ENCODE measurements at regions of chr1 and their contacts with region 1.

Region 1: DNA sequence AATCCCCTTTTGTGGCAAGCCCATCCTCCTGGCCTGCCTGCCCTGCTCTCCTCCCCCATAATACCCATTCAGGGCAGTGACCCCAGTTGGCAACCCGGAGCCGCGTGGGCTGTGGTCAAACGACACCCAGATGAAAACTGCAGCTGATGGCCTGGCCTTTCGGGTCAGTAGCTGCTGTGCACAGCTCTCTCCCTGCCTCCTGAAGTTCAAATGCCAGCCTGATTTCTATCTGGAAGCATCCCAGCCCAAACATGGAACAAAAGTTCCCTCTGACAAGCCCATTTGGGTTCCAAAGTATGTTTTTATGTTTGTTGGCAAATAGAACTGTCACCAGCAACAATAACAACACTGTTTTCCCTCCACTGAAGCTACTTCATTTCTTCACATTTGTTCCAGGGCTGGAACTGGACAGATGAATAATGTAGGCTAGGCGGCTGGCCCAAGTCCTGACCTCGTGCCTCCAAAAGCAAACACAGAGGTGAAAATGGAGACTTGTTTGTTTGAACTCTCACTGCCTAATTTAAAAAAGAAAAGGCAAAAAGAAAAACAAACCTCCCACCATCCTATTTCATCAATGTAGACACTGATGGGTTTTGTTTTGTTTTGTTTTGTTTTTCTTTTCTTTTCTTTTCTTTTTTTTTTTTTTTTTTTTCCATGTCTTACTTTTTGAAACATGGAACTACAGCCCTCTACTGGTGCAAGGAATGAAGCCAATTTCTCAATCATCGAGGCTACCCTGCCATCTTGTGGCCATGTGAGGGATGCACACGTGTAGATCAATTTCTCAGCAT is 179.0 kb downstream of the ADSS2 start:
- DNase-seq: peak; percentile 97
- H3K4me3 Mint-ChIP-seq: peak overlapping the region; percentile 65
- H3K27ac Mint-ChIP-seq: peak overlapping the region; percentile 52
- H3K4me1 Mint-ChIP-seq: peaks cover 32% of the 10 kb centered on the region
- H3K27me3 Mint-ChIP-seq: no peaks in the 10 kb centered on the region
- CTCF ChIP-seq: peak; percentile 100

Region 2: DNA sequence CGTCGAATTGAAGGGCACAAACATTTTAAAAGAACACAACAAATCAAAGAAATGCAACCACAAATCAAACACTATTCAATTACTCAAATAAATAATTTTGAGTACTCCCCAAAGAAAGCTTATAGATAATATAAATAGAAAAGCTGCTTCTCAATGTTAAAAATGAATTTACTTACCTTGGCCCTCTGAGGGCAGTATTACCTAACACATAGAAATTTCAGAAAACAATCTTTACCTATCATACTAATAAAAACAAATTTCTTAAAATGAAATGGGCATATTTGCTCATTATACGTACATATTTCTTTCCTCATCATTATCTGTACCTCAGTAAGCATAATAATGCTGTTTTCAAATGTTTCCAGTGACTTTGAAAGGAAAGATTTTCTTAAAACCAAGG is 564.5 kb before region 1 on chr1:
- CTCF ChIA-PET with region 1: interaction called, 75 read pairs
- POLR2A ChIA-PET with region 1: interaction called, 7 read pairs
- intact Hi-C with region 1: loop called (anchors 1 kb)
- DNase-seq: peak; percentile 32
- H3K4me3 Mint-ChIP-seq: no peak overlapping the region
- H3K27ac Mint-ChIP-seq: no peak overlapping the region
- H3K4me1 Mint-ChIP-seq: no peaks in the 10 kb centered on the region
- H3K27me3 Mint-ChIP-seq: no peaks in the 10 kb centered on the region
- CTCF ChIP-seq: peak; percentile 79

Region 3: DNA sequence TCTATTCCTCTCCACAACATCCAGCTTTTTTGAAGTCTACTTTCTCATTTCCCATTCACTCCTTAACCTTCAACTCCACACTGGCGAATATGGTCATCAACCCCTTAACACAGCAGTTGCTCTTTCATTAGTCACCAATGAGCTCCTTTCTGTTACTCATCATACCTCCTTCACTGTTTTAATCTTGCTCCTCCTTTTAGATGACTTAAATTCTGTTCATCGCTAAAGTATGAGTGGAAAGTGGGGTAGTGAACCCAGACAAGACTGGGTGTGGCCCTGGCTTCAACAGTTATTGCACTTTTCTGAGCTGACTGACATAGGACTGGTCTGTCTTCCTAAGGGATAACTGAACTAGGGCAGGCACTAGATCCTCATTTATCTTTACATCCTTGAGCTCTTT is 473.9 kb before region 1 on chr1:
- CTCF ChIA-PET with region 1: interaction called, 3 read pairs
- POLR2A ChIA-PET with region 1: no interaction called
- intact Hi-C with region 1: loop called (anchors 2 kb)
- DNase-seq: peak; percentile 86
- H3K4me3 Mint-ChIP-seq: no peak overlapping the region
- H3K27ac Mint-ChIP-seq: peak overlapping the region; percentile 0
- H3K4me1 Mint-ChIP-seq: peaks cover 24% of the 10 kb centered on the region
- H3K27me3 Mint-ChIP-seq: no peaks in the 10 kb centered on the region
- CTCF ChIP-seq: no peak

Region 4: DNA sequence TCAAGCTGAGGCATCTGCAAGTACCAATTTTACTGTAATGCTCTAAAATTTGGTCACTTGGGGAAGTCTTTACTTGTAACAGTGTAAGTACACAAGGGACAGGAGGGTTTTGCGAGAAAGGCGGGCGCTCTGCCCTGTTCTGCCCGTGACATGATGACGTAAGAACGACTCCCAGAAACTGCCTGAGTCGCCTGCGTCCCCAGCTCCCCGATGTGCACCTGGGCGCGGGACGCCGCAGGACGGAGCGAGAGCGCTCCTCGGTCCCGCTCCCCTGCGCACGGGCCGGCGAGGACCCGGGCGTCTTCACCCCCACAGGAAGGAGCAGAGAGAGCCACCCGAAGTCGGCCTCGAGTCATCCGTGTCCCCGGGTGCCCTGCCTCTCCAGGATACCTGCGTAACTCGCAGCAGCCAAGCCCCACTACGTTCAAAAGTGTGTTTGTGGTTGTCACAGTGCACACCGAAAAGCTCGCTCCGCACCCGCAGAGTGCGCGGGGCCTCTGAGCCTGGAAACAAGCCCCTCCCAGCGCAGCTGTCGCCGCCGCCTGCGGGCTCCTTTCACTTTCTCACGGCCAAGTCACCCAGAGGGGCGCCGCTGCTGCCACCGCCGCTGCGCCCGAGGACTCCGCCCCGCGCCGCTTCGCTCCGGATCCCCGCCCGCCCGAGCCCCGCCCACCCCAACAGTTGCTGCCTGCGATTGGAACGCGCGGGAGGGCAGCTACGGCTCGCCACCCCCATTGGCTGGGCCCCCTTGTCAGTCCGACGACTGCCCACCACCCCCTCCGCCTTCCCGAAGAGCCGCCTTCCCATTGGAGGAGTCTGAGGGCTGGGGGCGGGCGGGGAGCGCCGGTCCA is 224.8 kb before region 1 on chr1:
- CTCF ChIA-PET with region 1: interaction called, 9 read pairs
- POLR2A ChIA-PET with region 1: interaction called, 16 read pairs
- intact Hi-C with region 1: loop called (anchors 1 kb)
- DNase-seq: peak; percentile 100
- H3K4me3 Mint-ChIP-seq: peak overlapping the region; percentile 94
- H3K27ac Mint-ChIP-seq: peak overlapping the region; percentile 87
- H3K4me1 Mint-ChIP-seq: peaks cover 32% of the 10 kb centered on the region
- H3K27me3 Mint-ChIP-seq: peaks cover 13% of the 10 kb centered on the region
- CTCF ChIP-seq: no peak

Region 5: DNA sequence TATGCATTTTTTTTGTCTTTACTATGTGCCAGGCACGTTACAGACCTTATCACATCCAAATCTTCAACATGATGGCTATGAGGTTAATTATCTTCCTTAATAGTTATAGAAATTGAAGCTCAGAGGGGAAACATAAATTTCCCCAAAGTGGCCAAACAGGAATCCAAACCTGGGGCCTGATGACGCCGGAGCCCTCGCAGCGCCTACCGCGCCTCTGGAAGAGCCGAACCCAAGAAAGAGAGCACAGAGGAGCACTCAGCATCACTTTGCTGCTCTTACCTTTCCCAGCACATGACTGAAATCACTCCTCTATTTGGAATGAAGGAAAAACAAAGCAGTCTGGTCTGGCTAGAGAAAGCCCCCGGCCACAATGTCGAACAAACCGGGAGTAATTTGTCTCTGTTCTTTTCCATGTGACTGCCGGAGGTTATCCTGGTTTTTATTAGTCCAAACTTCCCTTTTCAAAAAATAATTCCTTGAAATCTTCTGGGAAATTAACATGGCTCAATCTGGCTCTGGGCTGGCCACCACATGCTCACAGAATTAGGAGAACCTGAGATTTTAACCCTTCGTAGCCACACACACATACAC is 16.5 kb before region 1 on chr1:
- CTCF ChIA-PET with region 1: interaction called, 51 read pairs
- POLR2A ChIA-PET with region 1: interaction called, 3 read pairs
- intact Hi-C with region 1: no loop called
- DNase-seq: no peak
- H3K4me3 Mint-ChIP-seq: no peak overlapping the region
- H3K27ac Mint-ChIP-seq: no peak overlapping the region
- H3K4me1 Mint-ChIP-seq: no peaks in the 10 kb centered on the region
- H3K27me3 Mint-ChIP-seq: peaks cover 4% of the 10 kb centered on the region
- CTCF ChIP-seq: no peak

Region 6: GRCh38 chr1:244319283-244320132 is 46.8 kb after region 1 on chr1:
- CTCF ChIA-PET with region 1: no interaction called
- POLR2A ChIA-PET with region 1: no interaction called
- intact Hi-C with region 1: no loop called
- DNase-seq: peak; percentile 91
- H3K4me3 Mint-ChIP-seq: no peak overlapping the region
- H3K27ac Mint-ChIP-seq: peak overlapping the region; percentile 39
- H3K4me1 Mint-ChIP-seq: peaks cover 25% of the 10 kb centered on the region
- H3K27me3 Mint-ChIP-seq: no peaks in the 10 kb centered on the region
- CTCF ChIP-seq: no peak

Region 7: DNA sequence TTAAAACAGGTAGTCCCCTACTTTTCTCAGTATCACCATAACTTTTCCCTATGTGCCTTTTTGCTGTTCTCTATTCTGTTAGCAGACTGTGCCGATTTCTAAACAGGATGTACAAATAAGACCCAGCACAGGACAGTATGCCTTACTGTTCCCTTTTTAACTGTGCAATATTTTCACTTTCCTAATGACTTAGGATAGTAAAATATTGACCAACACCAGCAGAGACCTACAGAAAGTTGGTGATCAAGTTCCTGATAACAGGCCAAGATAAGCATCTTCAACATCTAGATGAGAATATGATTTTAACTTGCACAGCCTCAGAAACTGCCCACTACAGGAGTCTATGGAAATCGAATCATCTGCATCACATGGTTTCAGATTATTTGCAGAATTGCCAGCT is 137.0 kb after region 1 on chr1:
- CTCF ChIA-PET with region 1: interaction called, 12 read pairs
- POLR2A ChIA-PET with region 1: no interaction called
- intact Hi-C with region 1: loop called (anchors 1 kb)
- DNase-seq: no peak
- H3K4me3 Mint-ChIP-seq: no peak overlapping the region
- H3K27ac Mint-ChIP-seq: no peak overlapping the region
- H3K4me1 Mint-ChIP-seq: peaks cover 16% of the 10 kb centered on the region
- H3K27me3 Mint-ChIP-seq: no peaks in the 10 kb centered on the region
- CTCF ChIP-seq: no peak

Region 8: DNA sequence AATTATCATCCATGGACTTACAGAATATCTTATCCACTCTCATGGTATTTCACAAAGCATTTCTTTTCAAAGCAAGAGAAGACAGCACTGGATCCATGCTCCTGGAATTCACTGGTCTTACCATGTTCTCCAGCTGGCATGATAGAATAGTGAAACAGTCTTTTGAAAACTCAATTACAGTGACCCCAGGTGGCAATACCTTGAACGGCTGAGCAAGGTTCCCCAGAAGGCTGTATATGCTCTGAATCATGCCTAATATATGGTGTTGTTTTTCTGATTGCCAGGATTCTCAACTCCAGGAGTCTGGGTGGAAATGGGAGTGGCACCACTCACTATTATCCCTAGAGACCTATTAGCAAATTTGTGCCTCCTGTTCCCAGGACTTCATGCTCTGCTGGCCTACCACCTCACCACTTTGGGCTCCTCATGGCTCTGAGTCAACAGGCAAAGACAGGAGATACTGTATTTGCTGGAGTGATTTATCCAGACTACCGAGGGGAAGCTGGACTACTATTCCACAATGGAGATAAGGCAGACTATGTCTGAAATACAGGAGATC is 276.0 kb after region 1 on chr1:
- CTCF ChIA-PET with region 1: no interaction called
- POLR2A ChIA-PET with region 1: no interaction called
- intact Hi-C with region 1: no loop called
- DNase-seq: no peak
- H3K4me3 Mint-ChIP-seq: no peak overlapping the region
- H3K27ac Mint-ChIP-seq: no peak overlapping the region
- H3K4me1 Mint-ChIP-seq: no peaks in the 10 kb centered on the region
- H3K27me3 Mint-ChIP-seq: no peaks in the 10 kb centered on the region
- CTCF ChIP-seq: no peak

Region 9: GRCh38 chr1:244796718-244797406 is 524.2 kb after region 1 on chr1:
- CTCF ChIA-PET with region 1: no interaction called
- POLR2A ChIA-PET with region 1: no interaction called
- intact Hi-C with region 1: loop called (anchors 2 kb)
- DNase-seq: peak; percentile 89
- H3K4me3 Mint-ChIP-seq: no peak overlapping the region
- H3K27ac Mint-ChIP-seq: no peak overlapping the region
- H3K4me1 Mint-ChIP-seq: peaks cover 5% of the 10 kb centered on the region
- H3K27me3 Mint-ChIP-seq: no peaks in the 10 kb centered on the region
- CTCF ChIP-seq: peak; percentile 92